Caco-2 (cell line): ENCODE measurements at regions of chr12 and their contacts with region 1.

Region 1: DNA sequence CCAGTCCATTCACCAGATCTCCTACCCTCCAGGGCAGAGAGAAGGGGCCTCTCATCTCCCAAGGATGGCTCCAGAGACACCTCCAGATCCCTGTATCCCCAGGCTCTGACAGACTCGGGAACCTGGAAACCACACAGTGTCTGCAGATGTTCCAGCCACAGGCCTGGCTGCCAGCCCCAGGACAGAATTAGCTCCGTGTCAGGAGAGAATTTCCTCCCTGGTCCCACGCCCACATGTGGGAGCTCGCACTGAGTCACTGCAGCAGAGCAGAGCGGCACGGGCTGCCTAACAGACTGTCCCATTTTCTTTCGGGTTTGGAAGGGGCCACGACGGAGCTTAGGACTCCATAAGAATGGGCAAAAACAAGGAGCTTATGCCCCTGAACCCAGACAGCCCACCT is 33.6 kb downstream of the CMKLR1 start:
- DNase-seq: no peak
- H3K4me3 ChIP-seq: no peak overlapping the region
- H3K4me3 Mint-ChIP-seq: no peak overlapping the region
- H3K27ac Mint-ChIP-seq: peak overlapping the region; percentile 81
- H3K4me1 ChIP-seq: peaks cover 38% of the 10 kb centered on the region
- H3K4me1 Mint-ChIP-seq: peaks cover 27% of the 10 kb centered on the region
- H3K27me3 ChIP-seq: no peaks in the 10 kb centered on the region
- H3K27me3 Mint-ChIP-seq: no peaks in the 10 kb centered on the region
- CTCF ChIP-seq: no peak

Region 2: DNA sequence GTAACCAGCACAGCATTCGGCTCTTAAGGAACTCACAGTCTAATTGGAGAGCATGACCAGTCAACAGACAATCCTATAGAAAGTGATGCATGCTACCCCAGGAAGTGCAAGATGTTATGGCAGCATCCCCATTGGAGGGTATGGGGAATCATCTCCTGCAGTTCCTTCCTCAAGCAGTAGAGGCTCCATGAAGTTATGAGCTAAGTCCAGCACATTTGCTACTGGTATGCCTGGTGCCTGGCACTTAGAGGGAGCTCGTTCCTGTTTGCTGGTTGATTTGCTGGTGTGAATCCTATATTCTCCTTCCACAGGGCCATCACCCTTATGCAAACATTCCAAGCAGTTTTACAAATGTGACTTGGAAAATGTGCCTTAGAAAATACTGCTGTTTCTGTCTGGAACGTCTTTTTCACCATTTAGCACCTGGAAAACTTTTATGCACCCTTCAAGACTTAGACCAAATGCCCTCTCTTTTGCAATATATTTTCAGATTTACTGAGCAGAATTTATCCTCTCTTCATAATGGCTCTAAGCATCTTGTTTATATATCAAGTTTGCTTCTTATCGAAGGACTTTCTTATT is 312.6 kb before region 1 on chr12:
- CTCF ChIA-PET with region 1: no interaction called
- POLR2A ChIA-PET with region 1: no interaction called
- intact Hi-C with region 1: loop called (anchors 5 kb)
- DNase-seq: peak; percentile 66
- H3K4me3 ChIP-seq: no peak overlapping the region
- H3K4me3 Mint-ChIP-seq: no peak overlapping the region
- H3K27ac Mint-ChIP-seq: no peak overlapping the region
- H3K4me1 ChIP-seq: no peaks in the 10 kb centered on the region
- H3K4me1 Mint-ChIP-seq: no peaks in the 10 kb centered on the region
- H3K27me3 ChIP-seq: no peaks in the 10 kb centered on the region
- H3K27me3 Mint-ChIP-seq: peaks cover 21% of the 10 kb centered on the region
- CTCF ChIP-seq: peak; percentile 62 to 73

Region 3: GRCh38 chr12:108337235-108338223 is 32.0 kb after region 1 on chr12:
- CTCF ChIA-PET with region 1: no interaction called
- POLR2A ChIA-PET with region 1: no interaction called
- intact Hi-C with region 1: loop called (anchors 5 kb)
- DNase-seq: peak in 1 of 2 experiments; percentile 32
- H3K4me3 ChIP-seq: no peak overlapping the region
- H3K4me3 Mint-ChIP-seq: no peak overlapping the region
- H3K27ac Mint-ChIP-seq: no peak overlapping the region
- H3K4me1 ChIP-seq: no peaks in the 10 kb centered on the region
- H3K4me1 Mint-ChIP-seq: no peaks in the 10 kb centered on the region
- H3K27me3 ChIP-seq: no peaks in the 10 kb centered on the region
- H3K27me3 Mint-ChIP-seq: peaks cover 6% of the 10 kb centered on the region
- CTCF ChIP-seq: peak; percentile 33 to 49

Region 4: GRCh38 chr12:108369736-108370396 is 64.3 kb after region 1 on chr12:
- CTCF ChIA-PET with region 1: no interaction called
- POLR2A ChIA-PET with region 1: no interaction called
- intact Hi-C with region 1: loop called (anchors 1 kb)
- DNase-seq: no peak
- H3K4me3 ChIP-seq: no peak overlapping the region
- H3K4me3 Mint-ChIP-seq: no peak overlapping the region
- H3K27ac Mint-ChIP-seq: no peak overlapping the region
- H3K4me1 ChIP-seq: no peaks in the 10 kb centered on the region
- H3K4me1 Mint-ChIP-seq: no peaks in the 10 kb centered on the region
- H3K27me3 ChIP-seq: no peaks in the 10 kb centered on the region
- H3K27me3 Mint-ChIP-seq: peaks cover 7% of the 10 kb centered on the region
- CTCF ChIP-seq: peak in 1 of 2 experiments; percentile 2

Region 5: DNA sequence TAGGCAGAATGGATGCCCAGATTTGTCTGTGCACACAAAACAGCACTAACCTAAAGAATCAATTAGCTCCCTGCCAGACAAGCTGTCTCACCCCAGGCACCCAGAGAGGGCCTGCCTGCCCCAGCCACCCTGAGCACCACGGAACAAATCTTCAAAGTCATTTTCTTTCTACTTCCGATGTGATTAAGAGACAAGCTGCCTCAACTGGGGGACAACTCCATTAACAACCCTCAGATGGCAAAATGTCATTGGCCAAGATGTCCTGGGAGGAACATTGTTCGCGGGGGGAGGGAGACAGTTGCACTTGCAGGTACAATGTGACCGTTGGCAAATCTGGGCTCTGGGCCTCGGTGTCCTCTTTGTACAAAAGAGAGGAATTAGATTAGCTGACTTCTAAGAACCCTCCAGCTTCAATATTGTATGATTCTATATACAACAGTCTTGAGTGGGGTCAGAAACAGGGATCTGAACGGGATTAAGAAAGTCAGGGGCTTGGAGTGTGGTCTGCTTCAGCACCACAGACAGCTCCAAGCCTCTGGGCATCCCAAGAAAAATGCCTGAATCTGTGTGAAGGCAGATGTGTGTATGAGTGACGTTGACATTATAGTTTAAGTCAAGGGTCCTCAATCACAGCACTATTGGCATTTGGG is 76.4 kb after region 1 on chr12:
- CTCF ChIA-PET with region 1: no interaction called
- POLR2A ChIA-PET with region 1: no interaction called
- intact Hi-C with region 1: loop called (anchors 1 kb)
- DNase-seq: peak in 1 of 2 experiments; percentile 55
- H3K4me3 ChIP-seq: no peak overlapping the region
- H3K4me3 Mint-ChIP-seq: no peak overlapping the region
- H3K27ac Mint-ChIP-seq: no peak overlapping the region
- H3K4me1 ChIP-seq: no peaks in the 10 kb centered on the region
- H3K4me1 Mint-ChIP-seq: no peaks in the 10 kb centered on the region
- H3K27me3 ChIP-seq: no peaks in the 10 kb centered on the region
- H3K27me3 Mint-ChIP-seq: peaks cover 4% of the 10 kb centered on the region
- CTCF ChIP-seq: no peak

Region 6: GRCh38 chr12:108457006-108457733 is 151.7 kb after region 1 on chr12:
- CTCF ChIA-PET with region 1: no interaction called
- POLR2A ChIA-PET with region 1: no interaction called
- intact Hi-C with region 1: loop called (anchors 1 kb)
- DNase-seq: peak; percentile 47 to 62
- H3K4me3 ChIP-seq: no peak overlapping the region
- H3K4me3 Mint-ChIP-seq: no peak overlapping the region
- H3K27ac Mint-ChIP-seq: no peak overlapping the region
- H3K4me1 ChIP-seq: no peaks in the 10 kb centered on the region
- H3K4me1 Mint-ChIP-seq: no peaks in the 10 kb centered on the region
- H3K27me3 ChIP-seq: no peaks in the 10 kb centered on the region
- H3K27me3 Mint-ChIP-seq: peaks cover 8% of the 10 kb centered on the region
- CTCF ChIP-seq: peak; percentile 51 to 71

Region 7: GRCh38 chr12:108514973-108515814 is 209.7 kb after region 1 on chr12 and contains the start of gene FICD:
- CTCF ChIA-PET with region 1: interaction called, 4 read pairs
- POLR2A ChIA-PET with region 1: no interaction called
- intact Hi-C with region 1: loop called (anchors 1 kb)
- DNase-seq: peak; percentile 99
- H3K4me3 ChIP-seq: peak within 1 kb of the TSS; percentile 77
- H3K4me3 Mint-ChIP-seq: peak within 1 kb of the TSS; percentile 82
- H3K27ac Mint-ChIP-seq: peak within 1 kb of the TSS; percentile 89
- H3K4me1 ChIP-seq: no peaks in the 10 kb centered on the region
- H3K4me1 Mint-ChIP-seq: peaks cover 18% of the 10 kb centered on the region
- H3K27me3 ChIP-seq: no peaks in the 10 kb centered on the region
- H3K27me3 Mint-ChIP-seq: peaks cover 2% of the 10 kb centered on the region
- CTCF ChIP-seq: no peak
- total RNA-seq, gene FICD: 2.8 and 3.6 TPM in 2 replicates